ENCODE measurements at regions of chr14 and their contacts with region 1.

Region 1: GRCh38 chr14:103984196-103984595 is 41.9 kb upstream of the RD3L start:
- DNase-seq: no peak
- H3K4me3 ChIP-seq: no peak overlapping the region
- H3K27ac ChIP-seq: no peak overlapping the region
- H3K4me1 ChIP-seq: no peaks in the 10 kb centered on the region
- H3K27me3 ChIP-seq: no peaks in the 10 kb centered on the region
- CTCF ChIP-seq: no peak

Region 2: GRCh38 chr14:103679351-103679750 is 304.8 kb before region 1 on chr14:
- CTCF ChIA-PET with region 1: no interaction called
- dilution Hi-C with region 1: no loop called
- in situ Hi-C with region 1: no loop called
- intact Hi-C with region 1: no loop called
- DNase-seq: no peak
- H3K4me3 ChIP-seq: no peak overlapping the region
- H3K27ac ChIP-seq: no peak overlapping the region
- H3K4me1 ChIP-seq: no peaks in the 10 kb centered on the region
- H3K27me3 ChIP-seq: no peaks in the 10 kb centered on the region
- CTCF ChIP-seq: peak; percentile 6 to 27

Region 3: DNA sequence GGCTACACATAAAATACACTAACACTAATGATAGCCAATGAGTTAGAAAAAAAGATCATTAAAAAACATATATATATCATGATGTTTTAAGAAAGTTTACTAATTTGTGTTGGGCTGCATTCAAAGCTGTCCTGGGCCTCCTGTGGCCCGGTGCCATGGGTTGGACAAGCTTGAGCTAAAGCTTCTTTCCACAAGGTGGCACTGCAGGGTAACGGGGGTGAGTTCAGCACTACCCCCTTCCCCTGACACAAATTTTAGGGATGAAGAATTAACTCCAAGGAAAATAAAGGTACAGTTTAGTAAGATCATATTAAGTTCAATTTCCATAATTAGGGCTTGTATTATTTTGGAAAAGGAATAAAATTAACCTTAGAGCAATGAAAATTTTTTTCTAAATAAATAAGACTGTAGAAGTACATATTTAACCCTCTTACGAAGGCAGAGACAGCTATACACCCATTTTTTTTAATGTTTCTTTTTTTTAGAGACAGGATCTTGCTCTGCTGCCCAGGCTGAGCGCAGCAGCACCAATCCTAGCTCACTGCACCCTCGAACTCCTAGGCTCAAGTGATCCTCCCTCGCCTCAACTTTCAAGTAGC is 175.7 kb before region 1 on chr14:
- CTCF ChIA-PET with region 1: no interaction called
- dilution Hi-C with region 1: no loop called
- in situ Hi-C with region 1: loop called (anchors 10 kb)
- intact Hi-C with region 1: loop called (anchors 1 kb)
- DNase-seq: peak; percentile 54
- H3K4me3 ChIP-seq: no peak overlapping the region
- H3K27ac ChIP-seq: no peak overlapping the region
- H3K4me1 ChIP-seq: peaks cover 11% of the 10 kb centered on the region
- H3K27me3 ChIP-seq: no peaks in the 10 kb centered on the region
- CTCF ChIP-seq: peak; percentile 83 to 92

Region 4: DNA sequence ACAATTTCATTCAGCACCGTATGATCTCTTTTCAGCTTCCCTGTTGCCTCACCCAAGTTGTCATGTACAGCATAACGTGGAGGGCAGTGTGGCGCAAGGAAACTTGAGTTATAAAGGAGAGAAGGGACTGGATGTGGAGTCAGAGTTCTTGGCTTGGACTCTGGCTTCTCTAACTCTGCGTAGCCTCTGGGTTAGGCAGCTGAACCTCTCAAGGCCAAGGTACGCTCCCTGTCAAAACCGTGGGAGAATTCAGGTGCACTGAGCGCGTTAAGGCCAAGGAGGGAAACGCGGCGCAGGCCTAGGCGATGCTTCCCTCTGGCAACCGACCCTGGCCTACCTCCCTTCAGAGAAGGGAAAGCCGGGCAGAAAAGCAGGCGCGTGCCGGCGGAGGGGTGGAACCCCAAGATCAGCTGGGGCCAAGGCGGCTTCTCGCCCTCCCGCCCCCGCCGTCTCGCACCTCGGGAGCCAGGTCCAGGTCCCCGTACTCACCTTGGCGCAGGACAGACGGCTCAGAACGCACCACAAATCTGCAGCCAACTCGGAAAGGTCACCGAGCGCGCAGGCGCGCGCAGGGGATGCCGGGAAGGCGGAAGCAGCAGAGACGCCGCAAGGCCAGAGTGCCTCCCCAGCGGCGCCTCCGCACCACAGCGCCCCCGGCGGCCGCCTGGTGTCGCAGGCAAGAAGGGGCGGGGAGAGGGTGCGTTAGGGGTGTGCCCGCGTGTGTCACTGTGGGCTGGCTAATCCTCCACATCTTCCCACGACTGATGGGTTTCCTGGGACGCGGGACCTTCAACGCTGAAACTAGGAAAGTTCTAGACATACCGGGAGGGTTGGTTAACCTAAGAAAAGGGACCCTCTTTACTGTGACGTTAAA is 63.0 kb before region 1 on chr14:
- CTCF ChIA-PET with region 1: interaction called, 46 read pairs
- dilution Hi-C with region 1: no loop called
- in situ Hi-C with region 1: no loop called
- intact Hi-C with region 1: loop called (anchors 2 kb)
- DNase-seq: peak; percentile 92
- H3K4me3 ChIP-seq: peak overlapping the region; percentile 80 to 98 (median 98)
- H3K27ac ChIP-seq: peak overlapping the region; percentile 78
- H3K4me1 ChIP-seq: no peaks in the 10 kb centered on the region
- H3K27me3 ChIP-seq: no peaks in the 10 kb centered on the region
- CTCF ChIP-seq: peak; percentile 89 to 99

Region 5: GRCh38 chr14:103932791-103933490 is 51.3 kb before region 1 on chr14:
- CTCF ChIA-PET with region 1: no interaction called
- dilution Hi-C with region 1: no loop called
- in situ Hi-C with region 1: no loop called
- intact Hi-C with region 1: loop called (anchors 1 kb)
- DNase-seq: peak; percentile 82
- H3K4me3 ChIP-seq: peak overlapping the region; percentile 2 to 27 (median 9)
- H3K27ac ChIP-seq: peak overlapping the region; percentile 75
- H3K4me1 ChIP-seq: peaks cover 18% of the 10 kb centered on the region
- H3K27me3 ChIP-seq: no peaks in the 10 kb centered on the region
- CTCF ChIP-seq: no peak

Region 6: DNA sequence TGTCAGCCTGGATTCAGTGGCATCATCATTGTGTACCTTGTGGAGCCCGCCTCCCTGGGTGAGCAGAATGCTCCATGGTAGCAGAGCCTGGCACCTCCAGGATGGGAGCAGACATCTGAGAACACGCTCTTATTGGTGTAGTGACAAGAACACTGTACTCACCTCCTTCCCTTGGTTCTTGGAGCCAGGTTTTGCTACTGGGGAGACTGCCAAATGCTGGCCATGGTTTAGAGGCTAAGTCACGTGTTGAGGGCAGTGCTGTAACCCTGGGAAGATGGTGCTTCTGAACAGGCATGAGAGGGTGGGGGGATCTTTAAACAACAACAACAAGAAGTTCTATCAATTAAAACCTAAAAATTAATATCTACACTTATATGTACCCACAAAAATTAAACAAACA is 53.7 kb after region 1 on chr14:
- CTCF ChIA-PET with region 1: no interaction called
- dilution Hi-C with region 1: no loop called
- in situ Hi-C with region 1: no loop called
- intact Hi-C with region 1: no loop called
- DNase-seq: no peak
- H3K4me3 ChIP-seq: no peak overlapping the region
- H3K27ac ChIP-seq: no peak overlapping the region
- H3K4me1 ChIP-seq: no peaks in the 10 kb centered on the region
- H3K27me3 ChIP-seq: peaks cover 8% of the 10 kb centered on the region
- CTCF ChIP-seq: no peak

Region 7: GRCh38 chr14:104064003-104064402 is 79.8 kb after region 1 on chr14:
- CTCF ChIA-PET with region 1: no interaction called
- dilution Hi-C with region 1: no loop called
- in situ Hi-C with region 1: no loop called
- intact Hi-C with region 1: no loop called
- DNase-seq: no peak
- H3K4me3 ChIP-seq: no peak overlapping the region
- H3K27ac ChIP-seq: no peak overlapping the region
- H3K4me1 ChIP-seq: no peaks in the 10 kb centered on the region
- H3K27me3 ChIP-seq: no peaks in the 10 kb centered on the region
- CTCF ChIP-seq: no peak

Measured in mammary epithelial cell (primary cell).